Cardiac septum (tissue), 1 donor: ENCODE measurements at regions of chr7 and their contacts with region 1.

Region 1: DNA sequence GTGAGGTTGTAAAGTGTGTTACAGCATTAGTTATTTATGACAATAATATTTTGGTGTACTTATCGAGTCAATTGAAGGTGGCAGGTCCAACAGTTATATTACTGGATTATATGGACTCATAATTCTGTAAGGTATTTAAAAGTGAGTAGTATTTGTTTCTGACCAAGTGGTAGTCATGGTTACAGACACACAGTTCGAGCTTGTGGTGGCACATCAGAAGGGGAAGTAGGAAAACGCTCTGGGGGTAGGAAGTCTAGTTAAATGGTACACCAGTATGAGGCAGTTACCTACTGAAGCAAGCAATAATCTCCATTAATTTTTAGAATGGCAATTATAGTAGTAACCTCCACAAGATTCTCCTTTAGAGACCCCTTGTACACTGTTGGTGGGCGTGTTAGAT is 541.2 kb downstream of the ETV1 start:
- DNase-seq: no peak

Region 2: GRCh38 chr7:13359656-13360055 is 88.6 kb before region 1 on chr7:
- intact Hi-C with region 1: no loop called
- DNase-seq: no peak

Region 3: DNA sequence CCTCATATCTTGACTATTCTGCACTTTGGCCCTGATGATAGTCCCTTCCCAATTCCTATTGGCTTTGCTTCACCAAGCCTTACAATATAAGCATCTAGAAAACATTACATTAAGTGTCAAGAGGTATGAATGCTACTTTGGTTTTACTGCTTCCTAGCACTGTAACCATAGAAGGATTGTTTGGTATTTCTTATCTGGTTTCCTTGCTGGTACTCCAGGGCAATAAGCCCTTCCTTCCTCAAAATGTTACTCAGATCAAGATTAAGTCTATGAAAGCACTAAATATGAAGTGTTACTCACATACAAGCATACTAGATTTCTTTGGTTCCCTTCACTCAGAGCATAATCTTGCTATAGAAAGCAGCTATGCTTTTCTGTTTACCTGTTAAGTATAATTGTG is 48.8 kb after region 1 on chr7:
- intact Hi-C with region 1: loop called (anchors 5 kb)
- DNase-seq: no peak